ENCODE measurements at regions of chr5 and their contacts with region 1.

Region 1: DNA sequence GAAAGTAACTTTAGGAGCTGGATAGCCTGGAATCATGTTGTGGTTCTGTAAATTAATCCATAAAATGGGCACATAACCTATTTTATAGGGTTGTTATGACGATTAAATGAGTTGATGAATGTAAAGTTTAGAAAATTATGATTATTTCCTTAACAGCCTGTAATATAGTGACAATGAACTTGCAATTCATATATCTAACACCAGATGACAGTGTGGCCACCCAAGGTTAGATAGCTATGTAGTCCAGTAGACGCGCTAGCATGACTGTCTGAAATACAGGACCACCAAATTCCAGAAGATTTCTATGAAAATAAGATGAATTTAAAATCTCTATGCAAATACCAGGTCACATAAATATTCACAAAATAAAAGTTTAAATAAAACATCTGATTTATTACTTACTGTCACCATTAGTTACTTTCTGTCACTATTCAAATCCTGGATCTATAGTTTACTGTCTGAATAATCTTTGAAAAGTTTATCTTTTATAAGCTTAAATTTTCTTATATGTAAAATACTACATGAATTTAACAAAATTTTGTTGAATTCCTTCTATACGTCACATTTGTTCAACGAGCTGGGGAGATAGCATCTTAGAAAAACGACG is 26.1 kb upstream of the MACIR start:
- DNase-seq: peak; percentile 69
- H3K4me3 Mint-ChIP-seq: no peak overlapping the region
- H3K27ac Mint-ChIP-seq: no peak overlapping the region
- H3K4me1 Mint-ChIP-seq: no peaks in the 10 kb centered on the region
- H3K27me3 Mint-ChIP-seq: peaks cover 47% of the 10 kb centered on the region

Region 2: GRCh38 chr5:103092676-103093075 is 139.8 kb before region 1 on chr5:
- intact Hi-C with region 1: no loop called
- DNase-seq: no peak
- H3K4me3 Mint-ChIP-seq: no peak overlapping the region
- H3K27ac Mint-ChIP-seq: no peak overlapping the region
- H3K4me1 Mint-ChIP-seq: no peaks in the 10 kb centered on the region
- H3K27me3 Mint-ChIP-seq: no peaks in the 10 kb centered on the region

Region 3: GRCh38 chr5:103475629-103476240 is 243.2 kb after region 1 on chr5:
- intact Hi-C with region 1: loop called (anchors 1 kb)
- DNase-seq: no peak
- H3K4me3 Mint-ChIP-seq: no peak overlapping the region
- H3K27ac Mint-ChIP-seq: no peak overlapping the region
- H3K4me1 Mint-ChIP-seq: no peaks in the 10 kb centered on the region
- H3K27me3 Mint-ChIP-seq: peaks cover 12% of the 10 kb centered on the region